ENCODE measurements at regions of chr16 and their contacts with region 1.

Region 1: GRCh38 chr16:68396481-68396880 is 51.8 kb downstream of the SMPD3 start:
- DNase-seq: peak in 6 of 7 donors; percentile 48 to 82 (median 53)
- H3K4me3 ChIP-seq: no peak overlapping the region
- H3K27ac ChIP-seq: no peak overlapping the region
- H3K4me1 ChIP-seq: peaks cover 0 to 3% of the 10 kb centered on the region in 2 donors
- H3K27me3 ChIP-seq: no peaks in the 10 kb centered on the region
- CTCF ChIP-seq: peak; percentile 45 to 76 (median 62)
- POLR2A ChIP-seq: no peak

Region 2: GRCh38 chr16:68510775-68511174 is 114.3 kb after region 1 on chr16:
- intact Hi-C with region 1: loop called (anchors 2 to 10 kb)
- DNase-seq: no peak
- H3K4me3 ChIP-seq: no peak overlapping the region
- H3K27ac ChIP-seq: no peak overlapping the region
- H3K4me1 ChIP-seq: peaks cover 5 to 7% of the 10 kb centered on the region in 2 donors
- H3K27me3 ChIP-seq: no peaks in the 10 kb centered on the region
- CTCF ChIP-seq: no peak
- POLR2A ChIP-seq: no peak

Region 3: DNA sequence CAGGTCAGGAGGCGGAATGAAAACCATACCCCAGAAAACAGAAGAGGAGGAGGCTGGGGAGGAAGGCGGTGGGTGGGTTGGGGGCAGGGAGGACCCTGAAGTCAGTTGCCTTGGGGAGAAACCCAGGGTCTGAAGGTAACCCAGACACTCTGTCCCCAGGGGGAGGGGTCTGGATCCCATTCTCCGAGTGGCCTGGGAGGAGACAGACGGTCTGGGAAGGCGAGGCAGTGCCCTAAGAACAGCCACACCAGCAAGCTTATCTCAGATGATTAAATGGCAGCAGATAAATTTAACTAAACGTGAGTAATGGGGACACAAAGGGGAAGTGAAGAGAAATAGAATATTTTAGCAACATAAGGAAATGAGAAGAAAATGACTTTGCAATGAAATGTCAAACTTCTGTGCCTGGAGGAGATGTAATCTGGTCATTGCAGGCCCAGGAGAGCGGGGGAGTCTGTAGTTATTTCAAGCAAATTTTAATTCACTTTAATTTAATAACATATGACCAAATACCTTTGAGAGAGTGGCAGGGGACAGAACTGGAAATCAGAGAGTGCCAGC is 121.2 kb after region 1 on chr16:
- intact Hi-C with region 1: loop called in 1 of 2 experiments (anchors 10 kb)
- DNase-seq: no peak
- H3K4me3 ChIP-seq: no peak overlapping the region
- H3K27ac ChIP-seq: no peak overlapping the region
- H3K4me1 ChIP-seq: peaks cover 0 to 5% of the 10 kb centered on the region in 2 donors
- H3K27me3 ChIP-seq: no peaks in the 10 kb centered on the region
- CTCF ChIP-seq: no peak
- POLR2A ChIP-seq: no peak